Breast epithelium (tissue), 4 donors: ENCODE measurements at regions of chr9 and their contacts with region 1.

Region 1: DNA sequence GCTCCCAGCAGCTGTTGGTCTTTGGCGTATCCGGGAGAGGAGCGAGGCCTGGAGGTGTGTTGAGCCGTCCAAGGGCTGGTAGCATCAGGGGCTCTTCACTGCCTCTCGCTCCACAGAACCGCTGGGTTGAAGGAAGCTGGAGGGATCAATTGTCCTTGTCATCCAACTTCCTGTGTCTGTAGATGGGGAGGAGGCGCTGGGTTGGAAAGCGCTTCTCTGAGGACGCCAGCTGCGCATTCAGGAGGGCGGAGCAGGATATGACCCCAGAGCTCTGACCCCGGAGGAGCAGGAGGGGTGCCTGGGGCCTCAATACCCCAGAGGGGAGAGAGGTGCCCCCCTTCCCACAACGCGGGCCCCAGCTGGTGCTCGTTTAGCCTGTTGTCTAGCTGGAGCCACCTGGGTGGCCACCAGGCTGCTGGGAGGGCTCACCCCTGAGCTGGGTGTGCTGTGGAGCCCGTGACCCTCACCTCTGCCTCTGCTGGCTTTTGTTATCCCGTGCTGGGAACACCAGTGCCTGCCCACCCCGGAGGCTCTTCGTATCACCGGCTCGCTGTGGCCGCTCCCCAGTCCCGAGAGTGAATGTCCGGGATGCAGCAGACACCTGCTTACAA is 2.0 kb upstream of the DBH start:
- DNase-seq: no peak
- H3K4me3 ChIP-seq: no peak overlapping the region
- H3K27ac ChIP-seq: no peak overlapping the region
- H3K4me1 ChIP-seq: no peaks in the 10 kb centered on the region
- H3K27me3 ChIP-seq: peaks cover 0 to 22% of the 10 kb centered on the region in 2 donors
- CTCF ChIP-seq: no peak
- POLR2A ChIP-seq: no peak

Region 2: DNA sequence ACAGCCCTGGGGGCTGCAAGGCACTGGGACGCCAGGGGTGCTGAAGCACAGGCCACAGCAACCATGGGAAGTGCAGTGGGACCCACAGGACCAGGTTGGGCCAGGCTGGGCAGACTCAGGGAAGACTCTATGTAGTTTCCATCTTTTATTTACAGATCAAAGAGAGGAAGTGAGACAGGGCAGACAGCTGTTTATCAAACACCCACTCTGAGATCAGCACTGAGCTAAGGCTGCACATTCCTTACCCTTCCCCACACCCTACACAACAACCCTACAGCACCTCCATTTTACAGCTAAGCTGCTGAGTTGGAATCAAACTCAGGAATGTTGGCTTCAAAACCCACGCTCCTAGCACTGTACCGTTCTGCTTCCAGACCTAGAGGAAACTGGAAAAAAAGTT is 1032.0 kb before region 1 on chr9:
- intact Hi-C with region 1: loop called (anchors 5 kb)
- DNase-seq: no peak
- H3K4me3 ChIP-seq: no peak overlapping the region
- H3K27ac ChIP-seq: no peak overlapping the region
- H3K4me1 ChIP-seq: no peaks in the 10 kb centered on the region
- H3K27me3 ChIP-seq: no peaks in the 10 kb centered on the region
- CTCF ChIP-seq: no peak
- POLR2A ChIP-seq: no peak

Region 3: GRCh38 chr9:133463234-133463729 is 170.9 kb before region 1 on chr9:
- intact Hi-C with region 1: no loop called
- DNase-seq: no peak
- H3K4me3 ChIP-seq: no peak overlapping the region
- H3K27ac ChIP-seq: no peak overlapping the region
- H3K4me1 ChIP-seq: peaks cover 0 to 7% of the 10 kb centered on the region in 2 donors
- H3K27me3 ChIP-seq: no peaks in the 10 kb centered on the region
- CTCF ChIP-seq: no peak
- POLR2A ChIP-seq: no peak

Region 4: DNA sequence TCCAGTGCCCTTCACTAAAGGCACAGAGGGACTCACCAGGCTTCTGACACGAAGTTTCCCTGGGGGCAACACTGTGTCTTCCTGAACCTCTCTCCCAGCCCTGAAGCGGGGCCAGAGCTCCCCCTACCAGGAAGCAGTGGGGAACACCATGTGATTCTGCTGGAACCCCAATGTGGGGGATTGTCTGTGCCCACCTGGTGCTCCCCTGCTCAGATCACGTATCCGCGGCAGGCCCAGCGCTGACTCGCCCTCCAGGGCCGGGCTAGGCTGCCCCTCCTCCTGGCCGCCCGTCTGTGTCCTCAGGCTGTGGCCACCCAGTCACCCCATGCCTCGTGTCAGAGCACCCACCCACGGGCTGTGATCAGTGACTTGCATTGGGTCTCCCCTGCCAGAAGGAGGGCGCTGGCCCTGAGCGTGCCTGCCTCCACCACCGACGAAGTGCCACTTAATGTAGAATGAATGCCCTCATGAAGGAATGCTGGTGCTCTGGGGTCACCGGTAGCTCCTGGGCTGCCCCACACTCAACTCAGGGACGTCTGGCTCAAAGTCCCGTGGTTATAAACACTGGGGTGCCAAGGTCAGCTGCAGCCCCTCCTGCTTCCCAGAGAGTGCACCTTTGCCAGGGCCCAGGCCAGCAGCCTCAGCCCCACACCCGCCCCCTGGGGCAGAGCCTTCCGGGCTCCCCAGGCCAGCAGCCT is 81.8 kb after region 1 on chr9:
- intact Hi-C with region 1: no loop called
- DNase-seq: no peak
- H3K4me3 ChIP-seq: no peak overlapping the region
- H3K27ac ChIP-seq: peak overlapping the region in 1 of 2 donors; percentile 58
- H3K4me1 ChIP-seq: no peaks in the 10 kb centered on the region
- H3K27me3 ChIP-seq: peaks cover 0 to 3% of the 10 kb centered on the region in 2 donors
- CTCF ChIP-seq: peak in 1 of 3 donors; percentile 10
- POLR2A ChIP-seq: no peak